ENCODE measurements at regions of chr2 and their contacts with region 1.

Region 1: DNA sequence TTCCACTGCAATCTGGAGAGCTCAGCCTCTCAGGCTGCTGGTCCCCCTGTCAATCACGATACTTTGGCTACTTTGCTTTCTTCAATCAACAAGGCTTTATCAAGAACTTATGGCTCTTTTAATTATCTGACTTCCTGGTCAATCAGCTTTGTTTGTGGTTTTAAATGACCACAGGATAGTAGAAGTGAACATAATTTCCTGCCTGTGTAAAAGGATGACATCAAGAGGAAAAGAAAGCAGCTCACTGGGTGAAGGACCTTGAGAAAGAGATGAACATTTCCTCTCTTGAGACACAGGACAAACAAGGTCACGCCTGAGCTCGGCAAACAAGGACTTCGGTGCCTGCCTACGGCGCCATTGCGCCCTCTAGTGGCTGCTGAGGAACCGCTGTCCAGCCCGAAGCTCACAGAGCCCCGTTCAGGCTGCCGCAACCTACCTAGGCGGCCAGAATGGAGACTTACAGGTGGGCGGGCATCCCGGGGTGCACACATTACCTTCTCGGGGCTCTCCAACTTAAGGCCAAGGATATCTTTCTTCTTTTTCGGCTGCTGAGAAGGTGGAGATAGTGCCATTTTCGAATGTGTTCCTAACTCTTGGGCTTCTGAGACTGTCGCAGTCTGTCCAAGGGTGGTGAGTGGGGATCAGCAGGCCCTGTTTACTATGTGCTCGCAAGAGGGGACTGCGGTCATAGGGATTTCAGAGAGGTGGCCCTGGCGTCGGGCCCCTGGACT is 54.0 kb downstream of the IL1RL2 start:
- DNase-seq: peak; percentile 91
- ATAC-seq: peak; percentile 99
- H3K4me3 Mint-ChIP-seq: no peak overlapping the region
- H3K27ac Mint-ChIP-seq: peak overlapping the region; percentile 37
- H3K4me1 Mint-ChIP-seq: peaks cover 32% of the 10 kb centered on the region
- H3K27me3 Mint-ChIP-seq: peaks cover 7% of the 10 kb centered on the region

Region 2: DNA sequence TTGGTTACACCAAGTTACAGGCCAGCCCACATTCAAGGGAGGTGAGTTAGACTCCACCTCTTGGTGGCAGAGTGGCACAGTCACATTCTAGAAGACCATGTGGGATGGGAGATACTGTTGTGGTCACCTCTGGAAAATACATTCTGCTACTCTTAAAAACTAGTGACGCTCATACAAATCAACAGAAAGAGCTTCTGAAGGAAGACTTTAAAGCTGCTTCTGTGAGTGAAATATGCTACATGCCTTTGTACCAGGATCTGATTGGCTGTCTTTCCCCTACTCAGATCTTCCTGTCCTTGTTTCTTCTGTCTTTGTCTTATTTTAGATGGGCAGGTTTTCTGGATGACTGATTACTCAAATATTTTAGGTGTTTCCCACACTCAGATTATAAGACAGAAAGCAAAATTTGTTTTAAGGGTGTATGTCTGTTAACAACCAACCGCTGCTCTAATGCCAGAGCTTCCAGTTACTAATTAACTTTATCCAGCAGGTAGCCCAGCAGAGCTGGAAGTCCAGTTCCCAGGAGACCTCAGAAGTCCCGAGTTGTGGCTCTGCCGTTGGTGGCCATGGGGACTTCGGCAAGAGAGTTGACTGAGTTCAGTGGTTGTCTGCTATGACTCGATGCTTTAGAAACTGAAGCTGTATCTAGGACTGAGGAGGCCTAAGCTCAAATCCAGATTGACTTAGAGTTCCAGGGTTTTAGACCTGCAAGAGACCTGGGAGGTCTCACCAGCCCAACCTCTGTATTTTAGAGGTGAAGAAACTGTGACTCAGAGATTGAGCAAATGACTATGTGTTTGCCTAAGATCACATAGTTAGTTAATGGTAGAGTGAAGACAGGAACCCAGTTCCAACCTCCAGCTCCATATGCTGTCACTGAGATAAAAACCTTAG is 241.7 kb before region 1 on chr2:
- CTCF ChIA-PET with region 1: interaction called, 11 read pairs
- DNase-seq: no peak
- ATAC-seq: peak; percentile 37
- H3K4me3 Mint-ChIP-seq: no peak overlapping the region
- H3K27ac Mint-ChIP-seq: no peak overlapping the region
- H3K4me1 Mint-ChIP-seq: peaks cover 32% of the 10 kb centered on the region
- H3K27me3 Mint-ChIP-seq: peaks cover 5% of the 10 kb centered on the region

Region 3: DNA sequence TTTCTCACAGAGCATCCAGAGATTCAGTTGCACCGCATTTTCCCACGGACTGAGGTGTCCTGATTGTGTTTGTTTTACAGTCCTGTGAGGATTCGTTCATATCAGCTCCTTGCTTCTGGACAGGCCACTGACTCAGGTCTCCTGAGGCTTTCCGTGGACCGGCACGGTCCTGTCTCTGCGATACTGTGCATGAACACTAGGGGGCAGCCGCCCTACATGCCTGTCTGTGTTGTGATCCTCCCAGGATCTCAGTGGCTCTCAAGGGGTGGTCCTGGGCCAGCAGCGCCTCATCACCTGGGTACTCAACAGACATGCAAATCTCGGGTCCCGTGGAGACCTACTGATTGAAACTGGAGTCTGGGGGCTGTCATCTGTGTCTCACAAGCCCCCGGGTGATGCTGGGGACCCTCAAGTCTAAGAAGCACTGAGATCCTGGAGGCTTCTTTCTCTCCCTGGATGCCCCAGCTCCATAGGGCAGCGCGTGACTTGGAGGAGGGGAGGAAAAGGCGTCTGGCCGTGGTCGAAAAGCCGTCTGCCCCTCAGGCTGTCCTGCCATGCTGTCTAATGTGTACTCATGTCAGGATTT is 220.1 kb before region 1 on chr2:
- CTCF ChIA-PET with region 1: interaction called, 57 read pairs
- DNase-seq: peak; percentile 85
- ATAC-seq: peak; percentile 93
- H3K4me3 Mint-ChIP-seq: no peak overlapping the region
- H3K27ac Mint-ChIP-seq: no peak overlapping the region
- H3K4me1 Mint-ChIP-seq: peaks cover 7% of the 10 kb centered on the region
- H3K27me3 Mint-ChIP-seq: peaks cover 5% of the 10 kb centered on the region

Region 4: DNA sequence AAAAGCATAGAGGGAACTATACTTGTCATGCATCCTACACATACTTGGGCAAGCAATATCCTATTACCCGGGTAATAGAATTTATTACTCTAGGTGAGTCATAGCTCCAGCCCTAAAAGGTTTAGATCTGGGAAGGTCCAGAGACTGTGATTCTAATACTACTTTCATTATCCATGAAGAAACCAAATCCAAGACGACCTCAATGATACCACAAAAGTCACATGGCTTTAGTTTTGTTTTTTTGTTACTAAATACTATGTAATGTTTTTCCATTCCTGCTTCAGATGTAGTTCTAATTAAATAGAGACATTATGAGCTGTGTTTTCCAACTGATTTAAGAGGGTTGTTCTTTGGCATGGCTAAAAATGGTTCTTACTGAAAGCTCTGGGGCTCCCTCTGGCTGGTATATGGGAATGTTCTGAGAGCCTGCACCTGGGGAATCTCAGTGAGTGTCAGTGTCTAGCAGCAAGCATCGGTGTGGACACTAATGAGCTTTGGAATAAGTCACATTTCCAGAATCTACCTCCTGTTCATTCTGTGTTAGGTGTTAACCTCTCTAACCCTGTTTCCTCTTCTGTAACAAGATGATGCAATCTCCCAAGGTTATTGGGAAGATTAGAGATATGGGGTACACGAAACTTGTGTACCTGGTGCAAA is 74.5 kb before region 1 on chr2:
- CTCF ChIA-PET with region 1: no interaction called
- DNase-seq: no peak
- ATAC-seq: no peak
- H3K4me3 Mint-ChIP-seq: no peak overlapping the region
- H3K27ac Mint-ChIP-seq: no peak overlapping the region
- H3K4me1 Mint-ChIP-seq: peaks cover 5% of the 10 kb centered on the region
- H3K27me3 Mint-ChIP-seq: peaks cover 2% of the 10 kb centered on the region

Region 5: DNA sequence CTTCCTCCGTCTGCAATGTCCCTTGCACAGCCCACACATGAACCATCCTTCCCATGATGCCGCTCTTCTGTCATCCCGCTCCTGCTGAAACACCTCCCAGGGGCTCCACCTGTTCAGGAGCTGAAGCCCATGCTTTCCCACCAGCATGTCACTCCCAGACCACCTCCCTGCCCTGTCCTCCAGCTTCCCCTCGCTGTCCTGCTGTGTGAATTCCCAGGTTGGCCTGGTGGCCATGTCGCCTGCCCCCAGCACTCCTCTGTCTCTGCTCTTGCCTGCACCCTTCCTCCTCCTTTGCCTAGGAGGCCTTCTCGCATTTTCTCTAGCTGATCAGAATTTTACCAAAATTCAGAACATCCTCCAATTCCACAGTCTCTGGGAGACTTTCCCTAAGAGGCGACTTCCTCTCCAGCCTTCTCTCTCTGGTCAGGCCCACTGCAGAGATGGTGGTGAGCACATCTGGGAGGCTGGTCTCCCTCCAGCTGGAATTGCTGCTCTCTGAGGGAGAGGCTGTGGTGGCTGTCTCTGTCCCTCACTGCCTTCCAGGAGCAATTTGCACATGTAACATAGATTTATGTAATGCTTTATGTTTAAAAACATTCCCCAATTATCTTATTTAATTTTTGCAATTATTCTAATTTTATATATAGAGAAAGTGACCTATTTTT is 62.9 kb before region 1 on chr2:
- CTCF ChIA-PET with region 1: no interaction called
- DNase-seq: no peak
- ATAC-seq: no peak
- H3K4me3 Mint-ChIP-seq: no peak overlapping the region
- H3K27ac Mint-ChIP-seq: no peak overlapping the region
- H3K4me1 Mint-ChIP-seq: no peaks in the 10 kb centered on the region
- H3K27me3 Mint-ChIP-seq: peaks cover 15% of the 10 kb centered on the region

Region 6: GRCh38 chr2:102230410-102230909 is 10.3 kb before region 1 on chr2:
- CTCF ChIA-PET with region 1: interaction called, 15 read pairs
- DNase-seq: no peak
- ATAC-seq: no peak
- H3K4me3 Mint-ChIP-seq: no peak overlapping the region
- H3K27ac Mint-ChIP-seq: no peak overlapping the region
- H3K4me1 Mint-ChIP-seq: peaks cover 60% of the 10 kb centered on the region
- H3K27me3 Mint-ChIP-seq: peaks cover 4% of the 10 kb centered on the region

Region 7: GRCh38 chr2:102301867-102302362 is 61.1 kb after region 1 on chr2:
- CTCF ChIA-PET with region 1: interaction called, 14 read pairs
- DNase-seq: peak; percentile 82
- ATAC-seq: peak; percentile 99
- H3K4me3 Mint-ChIP-seq: peak overlapping the region; percentile 12
- H3K27ac Mint-ChIP-seq: peak overlapping the region; percentile 60
- H3K4me1 Mint-ChIP-seq: peaks cover 29% of the 10 kb centered on the region
- H3K27me3 Mint-ChIP-seq: peaks cover 10% of the 10 kb centered on the region

Region 8: DNA sequence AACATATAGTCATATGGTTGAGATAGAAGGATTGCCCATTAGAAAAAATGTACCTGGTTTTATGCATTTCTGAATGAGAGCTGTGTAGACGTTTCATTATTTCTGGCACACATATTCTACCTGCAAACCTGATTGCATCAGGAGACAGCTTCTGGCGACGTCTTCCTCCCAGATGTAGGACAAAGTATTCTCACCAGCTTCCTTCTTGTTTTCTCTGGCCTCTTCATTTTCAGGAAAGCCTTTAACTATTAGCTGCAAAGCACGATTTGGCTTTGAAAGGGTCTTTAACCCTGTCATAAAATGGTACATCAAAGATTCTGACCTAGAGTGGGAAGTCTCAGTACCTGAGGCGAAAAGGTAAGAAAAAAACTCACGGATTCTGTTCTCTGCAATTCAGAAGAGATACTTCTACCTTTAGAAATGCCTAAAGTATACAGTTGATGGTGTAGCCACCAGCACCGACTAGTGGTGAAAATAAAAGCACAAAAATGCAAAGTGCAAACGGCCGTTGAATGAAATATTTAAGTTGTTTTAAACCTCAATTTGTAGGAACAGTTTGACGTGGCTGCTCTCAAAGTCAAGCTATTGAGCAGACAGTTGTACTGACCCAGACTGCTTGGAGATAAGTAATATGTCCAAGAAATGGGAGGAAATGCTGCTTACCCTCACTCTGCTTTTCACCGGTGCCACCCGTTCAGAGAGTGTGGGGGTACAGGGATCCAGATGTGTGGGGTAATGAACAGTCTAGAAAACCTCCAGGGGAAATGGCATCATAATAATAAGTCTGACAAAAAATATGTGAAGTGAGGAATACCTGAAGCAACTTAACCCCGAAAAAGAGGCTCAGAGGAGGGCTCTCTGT is 202.4 kb after region 1 on chr2:
- CTCF ChIA-PET with region 1: interaction called, 39 read pairs
- DNase-seq: peak; percentile 70
- ATAC-seq: peak; percentile 82
- H3K4me3 Mint-ChIP-seq: peak overlapping the region; percentile 7
- H3K27ac Mint-ChIP-seq: peak overlapping the region; percentile 68
- H3K4me1 Mint-ChIP-seq: peaks cover 10% of the 10 kb centered on the region
- H3K27me3 Mint-ChIP-seq: peaks cover 3% of the 10 kb centered on the region